Natural killer cell (primary cell): ENCODE measurements at regions of chr11 and their contacts with region 1.

Region 1: GRCh38 chr11:95231127-95231880 is at the start of gene SESN3:
- DNase-seq: peak; percentile 98
- ATAC-seq: peak; percentile 88 to 97 (median 90)
- H3K4me3 ChIP-seq: peak within 1 kb of the TSS; percentile 72
- H3K4me3 Mint-ChIP-seq: peak within 1 kb of the TSS; percentile 92
- H3K27ac ChIP-seq: peak within 1 kb of the TSS; percentile 87
- H3K27ac Mint-ChIP-seq: peak within 1 kb of the TSS in 1 of 2 donors; percentile 57
- H3K4me1 ChIP-seq: peaks cover 15% of the 10 kb centered on the region
- H3K4me1 Mint-ChIP-seq: peaks cover 13% of the 10 kb centered on the region in 2 donors
- H3K27me3 ChIP-seq: no peaks in the 10 kb centered on the region
- H3K27me3 Mint-ChIP-seq: peaks cover 3 to 16% of the 10 kb centered on the region in 2 donors
- CTCF ChIP-seq: no peak
- total RNA-seq, gene SESN3: 5.5 to 10.2 (median 7.6) TPM

Region 2: GRCh38 chr11:94493281-94494125 is 737.8 kb before region 1 on chr11 and contains the starts of genes ANKRD49 and MRE11:
- intact Hi-C with region 1: loop called (anchors 5 kb)
- DNase-seq: peak; percentile 97 to 99
- ATAC-seq: peak; percentile 99 to 100 (median 99)
- H3K4me3 ChIP-seq: peak within 1 kb of the TSS; percentile 64
- H3K4me3 Mint-ChIP-seq: peak within 1 kb of the TSS; percentile 95
- H3K27ac ChIP-seq: peak within 1 kb of the TSS; percentile 75
- H3K27ac Mint-ChIP-seq: peak within 1 kb of the TSS; percentile 93 to 94
- H3K4me1 ChIP-seq: no peaks in the 10 kb centered on the region
- H3K4me1 Mint-ChIP-seq: peaks cover 33 to 34% of the 10 kb centered on the region in 2 donors
- H3K27me3 ChIP-seq: no peaks in the 10 kb centered on the region
- H3K27me3 Mint-ChIP-seq: no peaks in the 10 kb centered on the region
- CTCF ChIP-seq: no peak
- total RNA-seq, gene ANKRD49: 47.7 to 55.6 (median 52.6) TPM
- total RNA-seq, gene MRE11: 42.1 to 45.2 (median 43.8) TPM

Region 3: GRCh38 chr11:94973099-94973968 is 258.0 kb before region 1 on chr11 and contains the starts of genes CWC15 and KDM4D:
- intact Hi-C with region 1: loop called (anchors 1 kb)
- DNase-seq: peak; percentile 88 to 97
- ATAC-seq: peak; percentile 98 to 100 (median 99)
- H3K4me3 ChIP-seq: peak within 1 kb of the TSS; percentile 68
- H3K4me3 Mint-ChIP-seq: peak within 1 kb of the TSS; percentile 99
- H3K27ac ChIP-seq: peak within 1 kb of the TSS; percentile 71
- H3K27ac Mint-ChIP-seq: peak within 1 kb of the TSS; percentile 91 to 98
- H3K4me1 ChIP-seq: peaks cover 4% of the 10 kb centered on the region
- H3K4me1 Mint-ChIP-seq: peaks cover 25 to 35% of the 10 kb centered on the region in 2 donors
- H3K27me3 ChIP-seq: no peaks in the 10 kb centered on the region
- H3K27me3 Mint-ChIP-seq: peaks cover 15 to 17% of the 10 kb centered on the region in 2 donors
- CTCF ChIP-seq: no peak
- total RNA-seq, gene CWC15: 76.8 to 90.7 (median 81.3) TPM
- total RNA-seq, gene KDM4D: 0.14 to 0.32 TPM in 2 of 3 donors, not detected in the other

Region 4: GRCh38 chr11:95067039-95067840 is 164.1 kb before region 1 on chr11:
- intact Hi-C with region 1: loop called (anchors 1 kb)
- DNase-seq: peak; percentile 67 to 86
- ATAC-seq: peak; percentile 72 to 82 (median 74)
- H3K4me3 ChIP-seq: peak overlapping the region; percentile 74
- H3K4me3 Mint-ChIP-seq: peak overlapping the region; percentile 99
- H3K27ac ChIP-seq: peak overlapping the region; percentile 87
- H3K27ac Mint-ChIP-seq: peak overlapping the region; percentile 97 to 99
- H3K4me1 ChIP-seq: peaks cover 6% of the 10 kb centered on the region
- H3K4me1 Mint-ChIP-seq: peaks cover 36 to 38% of the 10 kb centered on the region in 2 donors
- H3K27me3 ChIP-seq: no peaks in the 10 kb centered on the region
- H3K27me3 Mint-ChIP-seq: peaks cover 0 to 5% of the 10 kb centered on the region in 2 donors
- CTCF ChIP-seq: no peak

Region 5: GRCh38 chr11:95089620-95090542 is 141.4 kb before region 1 on chr11 and contains the start of gene ENDOD1:
- intact Hi-C with region 1: loop called (anchors 1 kb)
- DNase-seq: peak; percentile 78 to 92
- ATAC-seq: peak; percentile 93 to 98 (median 93)
- H3K4me3 ChIP-seq: peak within 1 kb of the TSS; percentile 83
- H3K4me3 Mint-ChIP-seq: peak within 1 kb of the TSS; percentile 95
- H3K27ac ChIP-seq: peak within 1 kb of the TSS; percentile 86
- H3K27ac Mint-ChIP-seq: peak within 1 kb of the TSS; percentile 94 to 97
- H3K4me1 ChIP-seq: peaks cover 21% of the 10 kb centered on the region
- H3K4me1 Mint-ChIP-seq: peaks cover 40 to 44% of the 10 kb centered on the region in 2 donors
- H3K27me3 ChIP-seq: no peaks in the 10 kb centered on the region
- H3K27me3 Mint-ChIP-seq: peaks cover 0 to 1% of the 10 kb centered on the region in 2 donors
- CTCF ChIP-seq: no peak
- total RNA-seq, gene ENDOD1: 10.1 to 15.5 (median 14.0) TPM

Region 6: DNA sequence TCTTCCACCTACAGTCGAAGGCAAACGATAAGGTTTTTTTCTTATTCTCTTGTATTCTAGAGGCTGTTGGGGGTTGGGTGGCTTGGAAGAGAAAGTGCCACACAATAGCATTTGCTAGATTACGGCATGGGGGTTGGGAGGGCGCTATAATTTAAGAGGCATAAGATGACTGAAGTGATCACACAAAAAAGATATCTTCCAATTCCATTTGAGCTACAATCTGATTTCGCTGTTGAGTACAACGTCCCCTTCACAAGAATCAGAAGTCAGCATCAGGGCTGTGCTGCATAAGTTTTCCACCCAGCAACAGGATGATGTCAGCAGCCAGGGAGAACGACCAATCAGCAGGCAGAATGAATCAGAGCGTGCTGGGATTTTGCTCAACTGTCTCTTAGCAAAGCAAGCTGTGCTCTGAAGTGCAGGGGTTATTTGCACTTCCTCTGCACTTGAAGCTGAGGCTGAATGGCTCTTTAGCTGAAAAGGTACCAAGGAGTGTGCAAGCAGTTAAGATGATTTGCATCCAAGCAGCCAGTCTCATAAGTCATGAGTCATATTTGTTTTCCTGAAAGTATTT is 22.9 kb after region 1 on chr11:
- intact Hi-C with region 1: loop called (anchors 2 kb)
- DNase-seq: peak; percentile 57 to 92
- ATAC-seq: peak; percentile 95 to 100 (median 99)
- H3K4me3 ChIP-seq: peak overlapping the region; percentile 31
- H3K4me3 Mint-ChIP-seq: peak overlapping the region; percentile 75
- H3K27ac ChIP-seq: peak overlapping the region; percentile 75
- H3K27ac Mint-ChIP-seq: peak overlapping the region in 1 of 2 donors; percentile 78
- H3K4me1 ChIP-seq: peaks cover 12% of the 10 kb centered on the region
- H3K4me1 Mint-ChIP-seq: peaks cover 0 to 14% of the 10 kb centered on the region in 2 donors
- H3K27me3 ChIP-seq: no peaks in the 10 kb centered on the region
- H3K27me3 Mint-ChIP-seq: peaks cover 2 to 7% of the 10 kb centered on the region in 2 donors
- CTCF ChIP-seq: no peak

Region 7: DNA sequence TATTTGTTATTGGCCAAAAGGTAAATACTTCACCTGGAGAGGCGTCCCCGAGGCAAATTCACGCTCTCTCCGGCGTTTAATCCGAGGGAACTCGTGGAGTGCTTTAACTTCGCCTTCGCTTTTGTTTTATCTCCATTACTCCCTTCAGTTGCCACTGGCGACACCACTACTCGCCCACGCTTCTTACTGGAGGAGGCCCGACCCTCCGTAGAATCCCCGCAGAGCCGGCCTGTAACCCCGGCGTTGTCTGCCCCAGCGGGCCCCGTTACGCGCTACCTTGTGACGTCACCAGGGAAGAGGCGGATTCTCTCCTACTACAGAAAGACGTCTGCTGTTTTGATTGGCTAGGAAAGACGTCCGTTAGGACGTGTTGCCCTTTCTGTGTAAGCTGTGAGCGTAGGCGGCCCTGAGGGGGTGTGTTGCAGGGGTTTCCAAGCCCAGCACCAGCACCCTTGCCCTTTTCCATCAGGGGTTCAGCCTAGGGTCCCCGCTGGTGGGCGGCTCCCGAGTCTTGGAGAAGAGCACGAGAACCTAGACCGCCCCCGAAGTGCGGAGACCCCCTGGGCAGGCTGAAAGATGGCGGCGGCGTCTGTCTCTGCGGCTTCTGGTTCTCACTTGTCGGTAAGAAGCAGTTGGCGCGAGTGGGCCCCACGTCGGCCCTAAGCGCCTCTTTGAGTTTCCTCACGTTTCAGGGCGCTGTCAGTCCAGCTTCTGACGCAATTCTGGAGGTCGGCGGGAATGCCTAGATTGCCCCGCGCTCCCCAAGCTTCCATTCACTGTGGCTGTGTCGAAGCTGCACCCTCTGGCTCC is 559.0 kb after region 1 on chr11 and contains the start of gene CEP57:
- intact Hi-C with region 1: loop called (anchors 1 kb)
- DNase-seq: peak; percentile 89 to 98
- ATAC-seq: peak; percentile 58 to 75 (median 62)
- H3K4me3 ChIP-seq: peak within 1 kb of the TSS; percentile 84
- H3K4me3 Mint-ChIP-seq: peak within 1 kb of the TSS; percentile 100
- H3K27ac ChIP-seq: peak within 1 kb of the TSS; percentile 95
- H3K27ac Mint-ChIP-seq: peak within 1 kb of the TSS; percentile 100
- H3K4me1 ChIP-seq: peaks cover 11% of the 10 kb centered on the region
- H3K4me1 Mint-ChIP-seq: peaks cover 59 to 60% of the 10 kb centered on the region in 2 donors
- H3K27me3 ChIP-seq: no peaks in the 10 kb centered on the region
- H3K27me3 Mint-ChIP-seq: no peaks in the 10 kb centered on the region
- CTCF ChIP-seq: no peak
- total RNA-seq, gene CEP57: 40.8 to 64.9 (median 55.1) TPM